ENCODE measurements at regions of chr3 and their contacts with region 1.

Region 1: GRCh38 chr3:150384296-150385212 is 23.5 kb upstream of the TSC22D2 start:
- DNase-seq: peak; percentile 47
- ATAC-seq: peak; percentile 95
- H3K4me3 Mint-ChIP-seq: peak overlapping the region; percentile 84
- H3K27ac Mint-ChIP-seq: peak overlapping the region; percentile 98
- H3K4me1 Mint-ChIP-seq: peaks cover 42% of the 10 kb centered on the region
- H3K27me3 Mint-ChIP-seq: no peaks in the 10 kb centered on the region
- CTCF ChIP-seq: no peak

Region 2: DNA sequence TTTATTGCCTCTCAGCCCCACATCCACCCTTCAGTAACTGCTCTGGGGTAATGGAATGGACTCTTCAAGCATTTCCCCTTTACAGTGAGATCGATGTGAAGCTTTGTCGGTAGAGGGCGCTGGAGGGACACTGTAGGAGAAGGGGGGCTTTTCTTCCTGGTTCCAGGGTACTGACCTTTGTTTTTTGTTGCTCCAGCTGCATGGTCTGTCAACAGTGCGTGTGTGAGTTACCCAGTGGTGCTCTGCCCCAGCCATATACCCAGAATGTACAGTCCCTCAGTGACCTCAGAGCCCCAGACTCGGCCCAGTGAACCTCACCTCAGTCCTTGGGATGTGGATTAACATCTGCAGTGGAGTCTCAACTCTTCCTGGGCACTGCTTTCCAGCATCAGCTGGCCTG is 156.7 kb before region 1 on chr3:
- CTCF ChIA-PET with region 1: no interaction called
- POLR2A ChIA-PET with region 1: no interaction called
- intact Hi-C with region 1: no loop called
- DNase-seq: no peak
- ATAC-seq: peak; percentile 21
- H3K4me3 Mint-ChIP-seq: no peak overlapping the region
- H3K27ac Mint-ChIP-seq: no peak overlapping the region
- H3K4me1 Mint-ChIP-seq: no peaks in the 10 kb centered on the region
- H3K27me3 Mint-ChIP-seq: peaks cover 29% of the 10 kb centered on the region
- CTCF ChIP-seq: no peak

Region 3: DNA sequence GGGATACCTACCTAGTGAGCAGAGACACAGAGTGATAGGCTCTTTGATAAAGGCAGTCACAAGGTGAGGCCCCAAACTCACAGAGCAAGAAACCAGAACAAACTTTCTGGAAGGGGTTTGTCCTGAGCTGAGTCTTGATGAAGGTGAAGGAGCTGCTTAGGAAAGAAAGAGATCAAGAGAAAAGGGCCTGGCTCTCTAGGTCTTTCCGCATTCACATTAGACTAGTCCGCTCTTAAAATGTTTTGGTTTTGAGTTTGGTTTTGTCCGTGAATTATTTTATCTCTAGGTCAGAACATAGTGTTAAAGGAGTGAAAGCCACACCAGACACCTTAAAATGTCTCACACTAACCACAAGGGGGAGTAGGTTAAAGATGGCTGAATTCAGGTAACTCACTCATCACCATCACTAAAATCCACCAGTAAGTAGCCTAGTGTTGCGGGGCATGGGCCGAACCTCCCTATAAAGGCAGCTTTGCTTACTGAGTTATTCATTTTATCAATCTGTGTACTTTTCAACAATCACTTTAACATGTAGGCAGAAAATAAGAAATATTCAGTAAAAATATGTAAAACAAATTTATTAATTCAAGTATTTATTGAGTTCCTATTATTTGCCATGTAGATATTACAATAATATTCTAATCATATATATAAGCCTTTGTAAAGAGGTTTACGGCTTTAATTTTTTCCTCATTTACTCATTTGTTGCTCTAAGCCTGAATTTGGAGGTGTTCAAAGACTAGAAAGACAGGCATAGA is 98.0 kb before region 1 on chr3:
- CTCF ChIA-PET with region 1: no interaction called
- POLR2A ChIA-PET with region 1: no interaction called
- intact Hi-C with region 1: loop called (anchors 1 kb)
- DNase-seq: no peak
- ATAC-seq: peak; percentile 74
- H3K4me3 Mint-ChIP-seq: no peak overlapping the region
- H3K27ac Mint-ChIP-seq: no peak overlapping the region
- H3K4me1 Mint-ChIP-seq: no peaks in the 10 kb centered on the region
- H3K27me3 Mint-ChIP-seq: peaks cover 21% of the 10 kb centered on the region
- CTCF ChIP-seq: peak; percentile 54